Sciatic nerve (tissue), 2 donors: ENCODE measurements at regions of chr7 and their contacts with region 1.

Region 1: GRCh38 chr7:621572-622285 is 102.1 kb upstream of the PDGFA start:
- DNase-seq: no peak
- ATAC-seq: no peak

Region 2: GRCh38 chr7:552868-553635 is 68.7 kb before region 1 on chr7:
- intact Hi-C with region 1: loop called (anchors 2 kb)
- DNase-seq: no peak
- ATAC-seq: no peak

Region 3: GRCh38 chr7:1123715-1124114 is 502.0 kb after region 1 on chr7:
- intact Hi-C with region 1: no loop called
- DNase-seq: peak; percentile 90
- ATAC-seq: peak; percentile 96